Activated T-helper 2 cell treated with anti-CD3 and anti-CD28 coated beads, Interferon-gamma antibody, Interleukin-2, Interleukin-4, amounts not matched to agents 10 μg/mL and 5 μg/mL and 100 μg/mL, durations not matched to agents 14 hours and 24 hours and 36 hours (primary cell): ENCODE measurements at regions of chr12 and their contacts with region 1.

Region 1: GRCh38 chr12:93847517-93848474 is 170.6 kb downstream of the CRADD start:
- DNase-seq: no peak
- H3K4me3 Mint-ChIP-seq: peak overlapping the region; percentile 40
- H3K27ac Mint-ChIP-seq: peak overlapping the region; percentile 81
- H3K4me1 Mint-ChIP-seq: peaks cover 54% of the 10 kb centered on the region
- H3K27me3 Mint-ChIP-seq: no peaks in the 10 kb centered on the region

Region 2: DNA sequence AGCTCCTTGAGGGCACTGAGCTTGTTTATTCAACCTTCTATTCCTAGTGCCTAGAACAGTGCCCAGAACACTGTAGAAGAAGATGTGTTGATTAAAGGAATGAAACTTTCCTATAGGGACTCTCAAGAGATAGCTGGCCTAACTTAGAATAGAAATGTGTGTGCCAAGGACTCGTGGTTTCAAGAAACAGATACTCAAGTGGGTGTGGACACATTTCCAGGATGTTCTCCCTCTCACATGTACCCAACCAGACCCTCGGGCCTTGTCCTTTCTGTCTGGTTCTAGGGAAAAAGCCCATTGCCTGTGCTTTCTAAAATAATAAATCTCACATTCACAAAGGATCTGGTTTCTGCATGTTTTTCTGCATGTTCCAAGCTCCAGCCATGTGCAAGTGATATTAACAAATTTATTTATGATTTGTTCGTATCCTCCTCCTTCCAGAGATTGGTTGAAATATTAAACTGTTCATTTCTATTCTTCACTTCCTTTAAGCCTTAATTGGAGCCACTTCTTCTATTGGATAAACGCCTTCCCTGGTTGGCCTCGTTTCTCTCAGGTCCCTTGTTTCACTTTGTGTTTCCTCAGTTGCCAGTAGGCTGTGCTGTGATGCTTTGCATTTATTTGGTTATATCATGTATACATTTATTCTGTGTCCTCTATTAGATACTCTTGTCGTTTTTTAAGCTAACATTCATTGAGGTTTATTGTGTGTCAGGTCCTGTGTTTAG is 80.8 kb before region 1 on chr12:
- intact Hi-C with region 1: loop called (anchors 5 kb)
- DNase-seq: peak; percentile 28
- H3K4me3 Mint-ChIP-seq: no peak overlapping the region
- H3K27ac Mint-ChIP-seq: no peak overlapping the region
- H3K4me1 Mint-ChIP-seq: peaks cover 32% of the 10 kb centered on the region
- H3K27me3 Mint-ChIP-seq: peaks cover 7% of the 10 kb centered on the region

Region 3: GRCh38 chr12:93879476-93880421 is 32.0 kb after region 1 on chr12:
- intact Hi-C with region 1: loop called (anchors 1 kb)
- DNase-seq: no peak
- H3K4me3 Mint-ChIP-seq: no peak overlapping the region
- H3K27ac Mint-ChIP-seq: peak overlapping the region; percentile 78
- H3K4me1 Mint-ChIP-seq: peaks cover 24% of the 10 kb centered on the region
- H3K27me3 Mint-ChIP-seq: peaks cover 4% of the 10 kb centered on the region

Region 4: DNA sequence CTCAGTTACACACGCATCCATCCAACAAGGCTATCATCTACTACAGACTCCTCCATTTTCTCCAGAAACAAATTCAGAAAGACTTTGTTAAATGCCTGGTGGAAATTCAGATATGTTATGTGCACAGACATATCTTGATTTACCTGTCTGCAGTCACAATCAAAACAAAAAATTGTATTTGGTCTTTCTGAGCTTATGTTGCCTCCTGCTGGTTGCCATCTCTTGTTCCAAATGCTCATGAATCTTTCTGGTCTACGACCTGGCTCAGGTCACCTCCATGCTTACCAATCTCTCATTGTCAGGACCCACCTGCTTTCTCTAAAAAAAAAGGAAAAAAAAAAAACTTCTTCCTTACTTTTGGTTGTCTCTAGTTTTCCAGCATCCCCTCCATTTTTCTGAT is 131.4 kb after region 1 on chr12:
- intact Hi-C with region 1: loop called (anchors 2 kb)
- DNase-seq: peak; percentile 13
- H3K4me3 Mint-ChIP-seq: no peak overlapping the region
- H3K27ac Mint-ChIP-seq: no peak overlapping the region
- H3K4me1 Mint-ChIP-seq: peaks cover 34% of the 10 kb centered on the region
- H3K27me3 Mint-ChIP-seq: peaks cover 8% of the 10 kb centered on the region